H1 (cell line): ENCODE measurements at regions of chr1 and their contacts with region 1.

Region 1: GRCh38 chr1:8314346-8315280 is 3.3 kb upstream of the SLC45A1 start:
- DNase-seq: peak; percentile 46 to 86
- H3K4me3 ChIP-seq: no peak overlapping the region
- H3K27ac ChIP-seq: no peak overlapping the region
- H3K4me1 ChIP-seq: peaks cover 0 to 16% (median 10%) of the 10 kb centered on the region in 4 experiments; a peak in 6 of 7 replicates
- H3K27me3 ChIP-seq: peaks cover 0 to 25% (median 13%) of the 10 kb centered on the region in 4 experiments; a peak in 6 of 7 replicates
- CTCF ChIP-seq: peak; percentile 94 to 97 (median 96)
- EP300 ChIP-seq: no peak
- POLR2A ChIP-seq: no peak
- RAD21 ChIP-seq: peak; percentile 99 to 100

Region 2: DNA sequence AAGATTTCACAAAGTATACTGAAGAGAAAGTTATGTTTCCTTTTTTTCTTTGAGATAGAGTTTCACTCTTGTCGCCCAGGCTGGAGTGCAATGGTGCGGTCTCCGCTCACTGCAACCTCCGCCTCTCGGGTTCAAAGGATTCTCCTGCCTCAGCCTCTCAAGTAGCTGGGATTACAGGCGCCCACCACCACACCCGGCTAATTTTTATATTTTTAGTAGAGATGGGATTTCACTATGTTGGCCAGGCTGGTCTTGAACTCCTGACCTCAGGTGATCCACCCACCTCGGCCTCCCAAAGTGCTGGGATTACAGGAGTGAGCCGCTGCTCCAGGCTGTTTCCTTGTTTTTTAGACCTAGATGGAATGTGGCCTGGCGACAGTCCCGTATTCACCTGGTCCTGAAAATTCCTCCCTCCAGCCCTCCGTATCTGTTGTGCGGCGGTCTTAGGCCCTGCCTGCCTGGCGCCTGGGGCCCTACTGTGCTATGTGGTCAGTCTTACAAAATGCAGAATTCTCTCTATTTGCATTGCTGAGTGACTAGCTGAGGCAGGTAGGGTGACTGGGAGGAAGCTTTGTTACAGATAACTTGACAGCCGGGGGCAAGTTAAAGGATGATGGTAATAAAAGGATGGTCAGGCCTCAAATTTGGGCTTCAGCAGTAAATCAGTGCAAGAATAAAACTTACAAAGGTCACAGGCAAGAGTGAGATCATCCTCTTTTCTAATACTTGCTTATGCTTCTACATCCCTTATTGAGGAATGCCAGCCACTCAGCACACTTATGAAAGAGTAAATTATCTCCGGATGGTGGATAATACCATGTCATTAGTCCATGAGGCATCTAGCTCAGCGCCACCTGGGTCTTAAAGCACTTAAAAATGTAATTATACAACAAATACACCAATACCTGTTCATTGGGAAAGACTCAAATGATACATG is 322.8 kb before region 1 on chr1:
- CTCF ChIA-PET with region 1: interaction called, 249 read pairs
- POLR2A ChIA-PET with region 1: interaction called, 4 read pairs
- DNase-seq: peak; percentile 80 to 90
- H3K4me3 ChIP-seq: no peak overlapping the region
- H3K27ac ChIP-seq: no peak overlapping the region
- H3K4me1 ChIP-seq: peaks cover 0 to 3% (median under 1%) of the 10 kb centered on the region in 4 experiments; a peak in 4 of 7 replicates
- H3K27me3 ChIP-seq: no peaks in the 10 kb centered on the region
- CTCF ChIP-seq: no peak
- EP300 ChIP-seq: no peak; a peak in 1 of 3 replicates
- POLR2A ChIP-seq: no peak
- RAD21 ChIP-seq: peak; percentile 5 to 33; a peak in 2 of 4 replicates

Region 3: GRCh38 chr1:8026153-8026975 is 288.2 kb before region 1 on chr1 and contains the start of gene ERRFI1:
- CTCF ChIA-PET with region 1: interaction called, 72 read pairs
- POLR2A ChIA-PET with region 1: interaction called, 12 read pairs
- DNase-seq: peak; percentile 77 to 98
- H3K4me3 ChIP-seq: peak within 1 kb of the TSS; percentile 57 to 85 (median 66)
- H3K27ac ChIP-seq: no peak within 1 kb of the TSS
- H3K4me1 ChIP-seq: peaks cover 11 to 25% (median 20%) of the 10 kb centered on the region in 4 experiments
- H3K27me3 ChIP-seq: peaks cover 0 to 8% (median 6%) of the 10 kb centered on the region in 4 experiments; a peak in 5 of 7 replicates
- CTCF ChIP-seq: no peak
- EP300 ChIP-seq: peak; percentile 16 to 74
- POLR2A ChIP-seq: peak; percentile 96 to 97
- RAD21 ChIP-seq: no peak
- total RNA-seq, gene ERRFI1: 46.1 TPM in 2 replicates

Region 4: GRCh38 chr1:8202182-8202905 is 112.3 kb before region 1 on chr1:
- CTCF ChIA-PET with region 1: interaction called, 16 read pairs
- POLR2A ChIA-PET with region 1: no interaction called
- DNase-seq: no peak
- H3K4me3 ChIP-seq: no peak overlapping the region
- H3K27ac ChIP-seq: no peak overlapping the region
- H3K4me1 ChIP-seq: peaks cover 5 to 12% (median 8%) of the 10 kb centered on the region in 4 experiments; a peak in 6 of 7 replicates
- H3K27me3 ChIP-seq: no peaks in the 10 kb centered on the region
- CTCF ChIP-seq: no peak
- EP300 ChIP-seq: no peak
- POLR2A ChIP-seq: no peak
- RAD21 ChIP-seq: no peak

Region 5: DNA sequence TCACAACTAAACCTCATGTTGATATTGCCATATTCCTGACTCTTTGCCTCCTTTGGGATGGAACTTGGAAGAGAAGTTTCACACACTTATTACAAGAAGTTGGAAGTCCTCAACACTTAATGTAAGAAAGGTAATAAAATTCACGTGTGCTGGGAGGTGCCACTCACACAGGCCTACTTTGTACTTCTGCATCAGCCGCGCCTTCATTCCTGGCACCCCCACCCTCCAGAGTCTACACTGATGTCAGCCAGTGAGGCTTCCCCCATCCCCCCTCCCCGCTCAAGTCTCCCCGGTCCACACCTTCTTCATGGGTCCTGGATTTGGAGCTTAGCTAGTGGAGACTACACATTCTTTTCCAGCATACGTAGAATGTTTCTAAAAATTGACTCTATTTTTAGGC is 21.5 kb before region 1 on chr1:
- CTCF ChIA-PET with region 1: interaction called, 19 read pairs
- POLR2A ChIA-PET with region 1: no interaction called
- DNase-seq: no peak
- H3K4me3 ChIP-seq: no peak overlapping the region
- H3K27ac ChIP-seq: no peak overlapping the region
- H3K4me1 ChIP-seq: no peaks in the 10 kb centered on the region
- H3K27me3 ChIP-seq: no peaks in the 10 kb centered on the region
- CTCF ChIP-seq: no peak
- EP300 ChIP-seq: no peak
- POLR2A ChIP-seq: no peak
- RAD21 ChIP-seq: no peak

Region 6: GRCh38 chr1:8343464-8344001 is 28.9 kb after region 1 on chr1:
- CTCF ChIA-PET with region 1: interaction called, 73 read pairs
- POLR2A ChIA-PET with region 1: interaction called, 3 read pairs
- DNase-seq: no peak
- H3K4me3 ChIP-seq: no peak overlapping the region
- H3K27ac ChIP-seq: no peak overlapping the region
- H3K4me1 ChIP-seq: peaks cover 0 to under 1% (median 0%) of the 10 kb centered on the region in 4 experiments; a peak in 1 of 7 replicates
- H3K27me3 ChIP-seq: no peaks in the 10 kb centered on the region
- CTCF ChIP-seq: no peak
- EP300 ChIP-seq: no peak
- POLR2A ChIP-seq: no peak
- RAD21 ChIP-seq: no peak